ENCODE measurements at regions of chr2 and their contacts with region 1.

Region 1: DNA sequence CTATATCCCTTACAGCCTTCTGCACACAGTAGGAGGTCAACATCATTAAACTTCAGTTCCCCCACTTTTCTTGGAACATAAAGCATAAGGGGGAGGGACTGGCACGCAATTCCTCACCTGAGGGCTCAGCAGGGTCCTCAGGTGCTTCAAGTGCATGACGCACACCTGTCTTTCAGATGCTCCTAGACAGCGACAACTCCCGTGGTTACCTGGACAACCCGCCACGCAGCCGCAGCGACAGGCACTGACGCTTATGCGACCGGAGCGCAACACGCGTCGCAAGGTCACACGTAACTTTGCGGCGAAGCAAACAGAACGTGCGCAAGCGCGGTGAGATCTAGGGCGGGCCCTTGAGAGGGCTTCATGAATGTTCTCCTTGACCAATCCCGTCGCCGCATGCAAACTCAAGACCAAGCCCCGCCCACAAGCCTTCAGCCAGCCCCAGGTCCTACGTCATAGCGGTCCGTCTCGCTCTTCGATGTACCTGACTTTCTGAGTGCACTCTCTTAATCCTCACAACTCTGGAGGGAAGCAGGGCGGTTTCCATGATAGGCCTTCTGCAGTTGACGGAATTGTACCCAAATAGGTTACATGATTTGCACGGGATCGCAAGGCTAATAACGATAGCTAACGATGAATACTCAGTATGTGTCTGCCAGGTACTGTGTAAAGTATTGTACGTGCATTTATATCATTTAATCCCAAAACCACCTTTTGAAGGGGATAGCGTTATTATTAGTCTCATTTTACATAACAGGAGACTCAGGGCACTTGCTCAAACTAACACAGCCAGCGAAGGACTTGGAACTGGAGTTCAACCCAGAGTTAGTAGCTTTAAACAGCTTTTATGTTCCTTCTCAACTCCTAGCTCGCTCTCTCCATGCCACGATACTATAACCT is at the start of gene IFT172:
- DNase-seq: peak; percentile 97 to 100
- ATAC-seq: peak; percentile 95 to 99 (median 96)
- H3K4me3 ChIP-seq: peak within 1 kb of the TSS; percentile 45
- H3K4me3 Mint-ChIP-seq: peak within 1 kb of the TSS; percentile 90
- H3K27ac ChIP-seq: peak within 1 kb of the TSS; percentile 77
- H3K27ac Mint-ChIP-seq: peak within 1 kb of the TSS; percentile 92
- H3K4me1 ChIP-seq: peaks cover 21% of the 10 kb centered on the region
- H3K4me1 Mint-ChIP-seq: peaks cover 14 to 20% of the 10 kb centered on the region in 2 donors
- H3K27me3 ChIP-seq: peaks cover 13% of the 10 kb centered on the region
- H3K27me3 Mint-ChIP-seq: peaks cover 12 to 21% of the 10 kb centered on the region in 2 donors
- CTCF ChIP-seq: no peak
- total RNA-seq, gene IFT172: 24.8 to 35.7 (median 30.7) TPM

Region 2: GRCh38 chr2:27211829-27212627 is 277.7 kb before region 1 on chr2 and contains the starts of genes ATRAID and SLC5A6:
- intact Hi-C with region 1: loop called (anchors 5 kb)
- DNase-seq: peak; percentile 92 to 94
- ATAC-seq: peak; percentile 89 to 96 (median 89)
- H3K4me3 ChIP-seq: peak within 1 kb of the TSS; percentile 81
- H3K4me3 Mint-ChIP-seq: peak within 1 kb of the TSS; percentile 100
- H3K27ac ChIP-seq: peak within 1 kb of the TSS; percentile 97
- H3K27ac Mint-ChIP-seq: peak within 1 kb of the TSS; percentile 99 to 100
- H3K4me1 ChIP-seq: peaks cover 19% of the 10 kb centered on the region
- H3K4me1 Mint-ChIP-seq: peaks cover 26 to 42% of the 10 kb centered on the region in 2 donors
- H3K27me3 ChIP-seq: no peaks in the 10 kb centered on the region
- H3K27me3 Mint-ChIP-seq: no peaks in the 10 kb centered on the region
- CTCF ChIP-seq: no peak
- total RNA-seq, gene ATRAID: 65.5 to 76.6 (median 76.5) TPM
- total RNA-seq, gene SLC5A6: 86.2 to 102 (median 93.7) TPM

Region 3: DNA sequence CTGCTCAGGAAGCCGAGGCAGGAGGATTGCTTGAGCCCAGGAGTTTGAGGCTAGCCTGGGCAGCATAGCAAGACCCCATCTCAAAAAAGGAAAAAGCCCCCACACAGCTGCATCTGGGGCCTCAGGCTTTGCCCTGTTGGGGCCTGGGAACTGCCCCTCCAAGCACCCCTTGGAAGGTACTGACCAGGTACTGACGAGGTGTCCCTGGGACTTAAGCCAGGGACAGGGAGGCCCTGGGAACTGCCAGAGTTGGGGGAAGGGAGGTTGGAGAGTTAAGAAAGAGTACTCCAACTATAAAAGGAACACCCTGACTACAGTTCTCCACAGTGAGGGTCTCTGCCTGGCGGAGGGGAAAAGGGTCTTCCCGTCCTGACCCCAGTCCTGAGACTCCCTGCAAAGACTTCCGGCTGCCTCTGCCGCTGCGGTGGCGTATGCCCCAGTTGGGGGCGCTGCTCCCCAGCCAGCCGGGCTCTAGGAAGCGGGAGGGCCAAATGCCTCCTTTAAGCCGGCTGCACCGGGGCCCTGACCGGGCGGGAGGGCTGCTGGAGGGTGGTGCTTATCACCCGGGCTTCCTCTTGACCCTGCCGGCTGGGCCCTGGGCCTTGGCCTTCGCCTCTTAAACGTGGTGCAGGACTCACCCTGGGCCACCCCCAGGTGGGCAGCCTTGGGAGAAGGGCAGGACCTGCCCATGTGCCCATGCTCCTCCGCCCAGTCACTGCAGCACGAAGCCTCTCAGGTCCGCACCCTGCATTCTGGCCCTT is 239.7 kb before region 1 on chr2:
- intact Hi-C with region 1: no loop called
- DNase-seq: peak; percentile 32 to 67
- ATAC-seq: peak in 2 of 3 donors; percentile 52 to 78
- H3K4me3 ChIP-seq: no peak overlapping the region
- H3K4me3 Mint-ChIP-seq: no peak overlapping the region
- H3K27ac ChIP-seq: no peak overlapping the region
- H3K27ac Mint-ChIP-seq: no peak overlapping the region
- H3K4me1 ChIP-seq: peaks cover 4% of the 10 kb centered on the region
- H3K4me1 Mint-ChIP-seq: no peaks in the 10 kb centered on the region
- H3K27me3 ChIP-seq: peaks cover 2% of the 10 kb centered on the region
- H3K27me3 Mint-ChIP-seq: peaks cover 11 to 22% of the 10 kb centered on the region in 2 donors
- CTCF ChIP-seq: peak; percentile 20

Region 4: DNA sequence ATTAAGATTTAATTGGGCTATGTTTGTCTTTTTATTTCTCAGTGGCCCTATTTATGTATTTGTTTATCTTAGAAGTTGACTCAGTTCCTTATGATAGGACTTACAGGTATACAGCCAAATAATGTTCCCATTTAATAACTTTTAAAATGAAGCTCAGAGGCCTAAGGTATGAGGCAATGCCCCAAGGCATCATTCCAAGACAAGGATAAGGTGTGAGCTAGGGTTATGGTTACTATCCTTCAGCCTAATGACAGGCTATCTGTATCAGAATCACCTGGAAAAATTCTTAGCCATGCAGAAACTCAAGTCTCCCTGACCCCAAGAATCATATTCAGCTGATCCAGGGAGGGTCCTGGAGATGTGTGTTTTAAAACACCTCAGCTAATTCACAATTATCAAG is 68.7 kb before region 1 on chr2:
- intact Hi-C with region 1: no loop called
- DNase-seq: no peak
- ATAC-seq: no peak
- H3K4me3 ChIP-seq: no peak overlapping the region
- H3K4me3 Mint-ChIP-seq: no peak overlapping the region
- H3K27ac ChIP-seq: no peak overlapping the region
- H3K27ac Mint-ChIP-seq: no peak overlapping the region
- H3K4me1 ChIP-seq: no peaks in the 10 kb centered on the region
- H3K4me1 Mint-ChIP-seq: no peaks in the 10 kb centered on the region
- H3K27me3 ChIP-seq: no peaks in the 10 kb centered on the region
- H3K27me3 Mint-ChIP-seq: no peaks in the 10 kb centered on the region
- CTCF ChIP-seq: no peak

Region 5: GRCh38 chr2:27992787-27993401 is 503.1 kb after region 1 on chr2:
- intact Hi-C with region 1: no loop called
- DNase-seq: no peak
- ATAC-seq: no peak
- H3K4me3 ChIP-seq: no peak overlapping the region
- H3K4me3 Mint-ChIP-seq: no peak overlapping the region
- H3K27ac ChIP-seq: no peak overlapping the region
- H3K27ac Mint-ChIP-seq: no peak overlapping the region
- H3K4me1 ChIP-seq: no peaks in the 10 kb centered on the region
- H3K4me1 Mint-ChIP-seq: peaks cover 9 to 11% of the 10 kb centered on the region in 2 donors
- H3K27me3 ChIP-seq: no peaks in the 10 kb centered on the region
- H3K27me3 Mint-ChIP-seq: no peaks in the 10 kb centered on the region
- CTCF ChIP-seq: no peak